ENCODE measurements at regions of chrX and their contacts with region 1.

Region 1: DNA sequence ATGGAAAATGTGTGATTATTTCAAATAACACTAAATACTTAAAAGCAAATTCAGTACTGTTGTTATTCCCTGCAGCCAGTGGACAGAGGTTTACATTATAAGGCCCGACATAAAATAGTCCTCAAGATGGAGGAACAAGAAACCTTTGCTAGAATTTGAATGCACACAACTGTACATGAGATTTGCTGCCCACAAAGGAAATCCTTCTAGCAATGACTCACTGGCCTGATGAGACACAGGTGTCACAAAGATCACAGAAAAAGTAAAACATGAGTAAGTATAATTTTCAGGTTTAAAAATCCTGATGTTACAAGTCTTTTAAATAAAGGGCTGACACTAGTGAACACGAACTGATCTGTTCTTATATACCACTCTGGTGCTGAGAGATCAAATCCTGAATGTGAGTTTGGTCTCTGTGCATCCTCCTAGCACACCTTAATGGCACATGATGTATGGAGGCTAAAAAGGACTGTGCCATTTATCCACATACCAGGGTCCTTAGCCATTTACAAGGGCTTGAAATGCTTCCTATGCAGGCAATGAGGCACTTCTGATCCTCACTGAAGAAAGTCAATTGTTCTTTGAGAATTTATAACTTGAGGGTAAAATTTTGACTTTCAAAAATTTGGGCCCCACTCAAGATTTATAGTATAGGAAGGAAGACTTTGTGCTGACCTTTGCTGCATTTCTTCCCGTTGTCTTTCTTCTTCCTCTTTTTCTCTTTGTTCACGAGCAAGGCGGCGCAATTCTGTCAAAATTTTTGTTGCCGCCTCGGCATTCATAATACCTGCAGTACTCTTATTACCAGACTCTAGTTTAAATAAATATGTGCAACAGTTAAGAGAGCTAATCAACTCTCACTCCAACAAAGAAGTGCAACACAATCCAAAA is 23.0 kb downstream of the MAP7D3 start:
- DNase-seq: peak; percentile 25
- H3K4me3 Mint-ChIP-seq: no peak overlapping the region
- H3K27ac Mint-ChIP-seq: peak overlapping the region; percentile 52
- H3K4me1 Mint-ChIP-seq: peaks cover 17% of the 10 kb centered on the region
- H3K27me3 Mint-ChIP-seq: no peaks in the 10 kb centered on the region

Region 2: DNA sequence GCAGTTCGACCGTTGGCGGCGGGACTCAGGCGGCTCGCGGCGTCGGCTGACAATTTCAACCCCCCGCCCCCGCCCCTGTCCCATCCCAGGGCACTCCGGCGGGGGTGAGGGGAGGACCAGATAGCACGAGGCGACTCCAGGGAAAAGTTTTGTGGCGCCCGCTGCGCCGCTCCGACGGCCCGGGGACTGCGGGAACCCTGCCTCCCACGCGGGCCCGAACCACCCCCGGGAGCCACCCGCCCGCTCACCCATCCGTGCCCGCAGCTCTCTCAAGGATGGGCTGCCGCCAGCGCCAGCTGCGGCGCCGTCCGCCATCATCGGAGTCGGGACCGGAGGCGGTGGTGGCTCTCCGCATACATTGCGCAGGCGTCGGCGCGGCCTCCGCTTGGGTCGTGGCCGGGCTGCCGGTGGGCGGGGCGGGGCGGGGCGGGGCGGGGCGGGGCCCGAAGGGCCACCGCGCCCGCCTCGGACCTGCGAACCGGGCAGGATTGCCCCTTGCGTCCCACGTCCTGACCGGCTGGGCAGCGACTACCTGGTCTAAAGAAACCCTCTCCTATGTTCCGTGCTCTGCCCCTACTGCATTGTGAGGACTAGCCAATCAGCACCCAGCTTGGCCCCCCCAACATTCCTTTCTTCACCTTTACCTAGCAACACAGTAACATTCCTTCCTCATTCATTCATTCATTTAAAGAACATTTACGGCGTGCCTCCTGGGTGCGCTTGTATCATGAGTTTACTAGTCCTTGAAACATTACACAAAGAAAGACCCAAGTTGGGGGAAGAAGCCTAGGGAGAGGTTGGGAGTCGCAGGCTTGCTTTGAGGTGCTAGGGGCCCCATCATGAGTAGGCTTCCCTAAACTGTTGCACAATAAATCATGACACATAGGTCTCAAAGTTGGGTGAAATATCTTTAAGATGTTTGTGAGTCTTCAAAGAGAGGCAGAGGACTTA is 23.1 kb after region 1 on chrX and contains the start of gene MAP7D3:
- CTCF ChIA-PET with region 1: no interaction called
- POLR2A ChIA-PET with region 1: no interaction called
- intact Hi-C with region 1: loop called (anchors 1 kb)
- DNase-seq: peak; percentile 76
- H3K4me3 Mint-ChIP-seq: peak within 1 kb of the TSS; percentile 82
- H3K27ac Mint-ChIP-seq: peak within 1 kb of the TSS; percentile 77
- H3K4me1 Mint-ChIP-seq: peaks cover 11% of the 10 kb centered on the region
- H3K27me3 Mint-ChIP-seq: no peaks in the 10 kb centered on the region
- total RNA-seq, gene MAP7D3: 18.2 to 20.5 TPM

Region 3: DNA sequence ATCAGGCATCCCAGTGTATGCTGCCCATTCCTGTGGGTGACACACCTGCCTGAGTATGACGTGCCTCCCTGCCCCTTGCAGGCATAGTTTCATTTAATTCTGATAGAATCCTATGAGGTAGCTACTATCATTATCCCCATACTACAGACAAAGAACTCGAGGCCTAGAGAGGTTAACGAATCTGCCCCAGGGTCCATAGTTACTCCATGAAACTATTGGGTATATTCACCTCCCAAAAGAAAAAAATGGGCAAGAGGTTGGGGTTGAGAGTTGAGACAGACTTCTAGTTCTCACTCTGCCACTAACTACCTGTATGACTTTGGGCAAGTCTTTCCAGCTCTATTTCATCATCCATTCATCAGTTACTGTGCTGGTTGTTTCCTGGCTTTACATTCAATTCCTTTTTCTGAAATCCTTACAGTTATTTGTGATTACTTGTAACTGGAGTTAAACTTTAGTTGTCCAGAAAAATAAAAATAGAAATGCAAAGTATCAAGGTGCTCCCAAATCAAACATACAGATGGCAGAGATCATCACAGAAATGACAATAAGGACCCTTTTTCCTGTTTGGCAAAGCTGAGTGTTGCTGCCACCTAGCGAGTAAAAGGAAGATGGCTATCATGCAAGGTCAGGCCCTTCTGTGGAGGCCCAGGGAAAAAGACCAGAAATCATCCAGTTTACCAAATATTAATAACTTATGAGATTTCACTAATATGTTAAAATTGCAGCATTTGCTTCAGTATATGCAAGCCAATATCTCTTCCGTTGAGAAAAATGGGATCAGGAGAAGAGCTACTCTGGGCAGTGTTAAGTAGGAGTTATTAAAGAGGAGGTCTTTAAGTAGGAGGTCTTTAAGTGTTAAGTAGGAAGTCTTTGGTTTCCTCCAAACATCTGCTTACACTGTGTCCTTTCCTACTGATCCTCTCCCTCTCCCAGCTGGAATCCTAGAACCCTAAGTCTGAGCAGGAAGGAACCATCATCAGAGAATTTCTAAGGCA is 40.2 kb after region 1 on chrX:
- CTCF ChIA-PET with region 1: no interaction called
- POLR2A ChIA-PET with region 1: no interaction called
- intact Hi-C with region 1: loop called (anchors 2 kb)
- DNase-seq: peak; percentile 57
- H3K4me3 Mint-ChIP-seq: no peak overlapping the region
- H3K27ac Mint-ChIP-seq: no peak overlapping the region
- H3K4me1 Mint-ChIP-seq: peaks cover 4% of the 10 kb centered on the region
- H3K27me3 Mint-ChIP-seq: no peaks in the 10 kb centered on the region